ENCODE measurements at regions of chr17 and their contacts with region 1.

Region 1: DNA sequence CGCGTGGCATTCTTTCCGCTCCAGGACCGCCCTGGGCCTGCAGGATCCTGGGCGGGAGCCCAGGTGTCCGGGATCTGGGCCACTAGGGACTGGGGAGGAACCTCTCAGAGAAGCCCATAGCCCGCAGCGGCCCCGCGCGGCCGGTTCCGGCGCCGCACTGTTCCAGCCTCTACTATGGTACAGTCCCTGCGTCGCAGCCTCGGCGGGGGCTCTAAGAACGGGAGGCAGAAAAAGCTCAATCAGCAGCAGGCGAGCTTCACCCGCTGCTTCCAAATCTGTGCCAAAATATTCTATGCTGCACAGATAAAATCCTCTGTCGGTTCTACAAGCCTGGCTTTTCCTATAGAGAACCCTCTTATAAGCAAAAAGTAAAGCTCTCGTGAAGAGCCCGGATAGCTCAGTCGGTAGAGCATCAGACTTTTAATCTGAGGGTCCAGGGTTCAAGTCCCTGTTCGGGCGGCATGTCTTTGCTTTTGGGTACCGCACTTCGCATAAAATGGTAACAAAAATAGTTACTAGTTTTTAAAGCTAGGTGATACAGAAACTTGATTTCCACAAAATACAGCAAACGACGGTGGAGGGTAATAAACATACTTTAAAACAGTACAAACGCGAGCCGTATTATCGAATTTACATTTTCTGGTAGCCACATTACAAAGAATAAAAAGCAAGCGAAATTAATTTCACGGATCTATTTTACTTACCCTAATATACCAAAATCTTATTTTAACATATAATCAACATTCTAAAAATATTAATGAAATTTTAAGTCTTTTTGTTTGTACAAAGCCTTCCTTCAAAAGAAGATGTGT is 661 bp upstream of the ALOXE3 start:
- DNase-seq: peak; percentile 78
- H3K4me3 Mint-ChIP-seq: peak overlapping the region; percentile 91
- H3K27ac Mint-ChIP-seq: peak overlapping the region; percentile 97
- H3K4me1 Mint-ChIP-seq: peaks cover 46% of the 10 kb centered on the region
- H3K27me3 Mint-ChIP-seq: peaks cover 67% of the 10 kb centered on the region

Region 2: DNA sequence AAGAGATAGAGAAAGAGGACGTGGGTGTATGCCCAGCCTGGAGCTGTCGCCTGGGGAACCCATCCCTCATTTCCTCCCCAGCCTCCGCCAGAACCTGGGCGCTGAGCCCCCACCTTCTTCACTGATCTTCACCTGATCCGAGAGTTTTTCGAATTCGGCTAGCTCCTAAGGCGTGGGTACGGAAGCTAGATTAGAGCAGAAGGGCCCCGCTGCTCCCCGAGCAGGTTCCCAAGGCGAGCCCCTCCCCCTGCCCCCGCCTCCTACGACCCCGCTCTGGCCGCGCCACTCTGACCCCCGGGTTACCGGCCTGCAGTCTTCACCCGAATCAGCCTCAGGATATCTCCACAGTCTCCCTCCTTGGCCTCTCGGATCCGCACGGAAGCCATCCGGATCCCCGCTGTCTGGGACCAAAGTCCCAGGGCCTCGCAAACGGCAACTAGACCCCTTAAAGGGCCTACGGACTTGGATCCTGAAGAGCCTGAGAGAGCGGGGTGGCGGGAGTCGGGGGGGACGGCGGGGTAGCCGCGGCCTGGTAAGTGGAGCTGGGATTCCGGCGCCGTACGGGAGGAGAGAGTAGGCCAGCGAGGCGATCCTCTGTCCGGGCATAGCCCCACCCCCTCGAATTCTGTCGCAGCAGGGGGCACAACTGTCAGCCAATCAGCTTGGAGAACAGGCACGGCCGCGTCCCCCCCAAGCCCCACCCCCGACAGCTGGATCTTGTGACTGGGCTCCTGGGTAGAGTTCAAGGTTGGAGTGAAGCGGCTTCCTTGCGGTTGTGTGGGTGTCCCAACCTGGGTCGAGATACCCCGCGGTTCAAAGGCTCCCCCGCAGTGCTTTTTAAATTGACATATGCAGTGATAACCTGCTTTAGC is 491.5 kb before region 1 on chr17 and contains the start of gene SAT2:
- intact Hi-C with region 1: loop called (anchors 2 kb)
- DNase-seq: peak; percentile 77
- H3K4me3 Mint-ChIP-seq: peak within 1 kb of the TSS; percentile 89
- H3K27ac Mint-ChIP-seq: peak within 1 kb of the TSS; percentile 77
- H3K4me1 Mint-ChIP-seq: peaks cover 18% of the 10 kb centered on the region
- H3K27me3 Mint-ChIP-seq: no peaks in the 10 kb centered on the region
- total RNA-seq, gene SAT2: 23.8 and 24.0 TPM in 2 replicates

Region 3: DNA sequence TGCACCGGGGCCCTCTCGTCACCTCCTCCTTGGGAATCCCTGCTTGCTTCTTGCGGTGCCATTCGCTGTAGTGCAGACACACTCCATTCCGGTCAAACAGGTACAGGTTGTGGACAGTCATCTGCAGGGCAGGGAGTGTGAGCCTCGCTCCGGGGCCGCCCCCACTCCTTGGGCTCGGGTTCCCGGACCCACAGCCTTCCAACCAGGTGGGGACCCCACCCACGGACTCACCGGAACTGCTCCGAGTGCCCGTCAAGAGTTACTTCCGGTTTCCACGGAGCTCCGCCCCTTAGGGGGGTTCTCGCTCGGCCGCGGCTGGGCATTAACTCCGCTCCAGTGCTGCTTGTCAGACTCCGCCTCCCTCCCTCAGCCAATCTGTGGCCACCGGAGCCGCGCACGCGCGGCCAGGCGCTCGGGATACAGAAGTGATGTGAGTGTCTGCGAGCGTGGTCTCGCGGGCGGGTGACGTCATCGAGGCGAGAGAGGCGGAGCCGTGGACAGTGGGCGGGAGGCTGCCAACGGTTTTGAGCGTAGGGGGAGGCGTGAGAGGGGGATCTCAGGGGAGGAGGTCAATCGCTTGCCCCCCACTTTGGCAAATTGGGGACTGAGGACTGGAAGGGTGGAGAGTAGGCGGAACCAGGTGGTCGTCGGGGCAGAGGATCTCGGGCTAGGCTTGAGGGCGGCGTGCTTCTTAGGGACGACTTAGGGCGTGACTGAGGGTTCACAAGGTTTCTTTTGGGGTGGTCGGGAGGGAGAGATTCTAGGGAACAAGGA is 187.1 kb before region 1 on chr17 and contains the starts of genes CNTROB and TRAPPC1:
- intact Hi-C with region 1: loop called (anchors 1 kb)
- DNase-seq: peak; percentile 100
- H3K4me3 Mint-ChIP-seq: peak within 1 kb of the TSS; percentile 99
- H3K27ac Mint-ChIP-seq: peak within 1 kb of the TSS; percentile 99
- H3K4me1 Mint-ChIP-seq: peaks cover 42% of the 10 kb centered on the region
- H3K27me3 Mint-ChIP-seq: no peaks in the 10 kb centered on the region
- total RNA-seq, gene CNTROB: 53.5 and 54.7 TPM in 2 replicates
- total RNA-seq, gene TRAPPC1: 153 and 162 TPM in 2 replicates

Region 4: GRCh38 chr17:8091033-8091687 is 27.8 kb before region 1 on chr17:
- intact Hi-C with region 1: loop called (anchors 1 kb)
- DNase-seq: no peak
- H3K4me3 Mint-ChIP-seq: no peak overlapping the region
- H3K27ac Mint-ChIP-seq: no peak overlapping the region
- H3K4me1 Mint-ChIP-seq: peaks cover 14% of the 10 kb centered on the region
- H3K27me3 Mint-ChIP-seq: peaks cover 24% of the 10 kb centered on the region

Region 5: GRCh38 chr17:8173056-8173870 is 54.3 kb after region 1 on chr17:
- intact Hi-C with region 1: loop called (anchors 1 kb)
- DNase-seq: peak; percentile 76
- H3K4me3 Mint-ChIP-seq: peak overlapping the region; percentile 87
- H3K27ac Mint-ChIP-seq: peak overlapping the region; percentile 99
- H3K4me1 Mint-ChIP-seq: peaks cover 45% of the 10 kb centered on the region
- H3K27me3 Mint-ChIP-seq: peaks cover 2% of the 10 kb centered on the region

Region 6: DNA sequence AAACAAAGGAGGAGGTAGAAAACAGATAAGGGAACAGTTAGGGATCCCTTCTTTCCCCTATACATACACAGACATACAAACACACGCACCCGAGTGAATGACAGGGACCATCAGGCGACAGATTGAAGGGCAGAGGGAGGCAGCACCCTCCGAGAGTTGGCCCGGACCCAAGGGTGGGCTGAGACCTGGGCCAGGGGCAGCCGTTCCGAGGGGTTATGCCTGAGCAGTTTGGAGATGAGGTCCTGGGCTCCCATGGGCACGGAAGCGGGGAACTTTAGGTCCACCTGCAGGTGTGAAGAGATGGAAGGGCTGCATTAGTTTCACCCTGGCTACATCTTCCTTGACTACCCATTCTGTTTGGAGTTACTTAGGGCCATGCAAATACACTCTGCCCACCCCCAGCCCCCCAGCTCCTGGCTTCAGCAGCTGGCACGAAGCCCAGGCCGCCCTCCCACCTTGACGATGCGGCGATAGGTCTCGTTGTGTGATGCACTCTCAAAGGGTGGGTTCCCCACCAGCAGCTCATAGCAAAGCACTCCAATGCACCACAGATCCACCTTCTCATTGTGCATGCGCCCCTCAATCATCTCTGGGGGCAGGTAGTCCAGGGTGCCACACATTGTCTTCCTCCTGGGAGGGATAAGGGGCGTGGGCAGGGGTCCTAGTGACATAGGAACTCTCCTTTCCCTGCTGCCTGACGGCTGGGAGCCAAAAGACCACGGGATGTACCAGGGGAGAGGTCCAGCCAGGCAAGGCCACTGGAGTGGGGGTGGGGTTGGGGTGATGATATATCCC is 86.0 kb after region 1 on chr17:
- intact Hi-C with region 1: no loop called
- DNase-seq: no peak
- H3K4me3 Mint-ChIP-seq: no peak overlapping the region
- H3K27ac Mint-ChIP-seq: no peak overlapping the region
- H3K4me1 Mint-ChIP-seq: peaks cover 26% of the 10 kb centered on the region
- H3K27me3 Mint-ChIP-seq: no peaks in the 10 kb centered on the region

Region 7: DNA sequence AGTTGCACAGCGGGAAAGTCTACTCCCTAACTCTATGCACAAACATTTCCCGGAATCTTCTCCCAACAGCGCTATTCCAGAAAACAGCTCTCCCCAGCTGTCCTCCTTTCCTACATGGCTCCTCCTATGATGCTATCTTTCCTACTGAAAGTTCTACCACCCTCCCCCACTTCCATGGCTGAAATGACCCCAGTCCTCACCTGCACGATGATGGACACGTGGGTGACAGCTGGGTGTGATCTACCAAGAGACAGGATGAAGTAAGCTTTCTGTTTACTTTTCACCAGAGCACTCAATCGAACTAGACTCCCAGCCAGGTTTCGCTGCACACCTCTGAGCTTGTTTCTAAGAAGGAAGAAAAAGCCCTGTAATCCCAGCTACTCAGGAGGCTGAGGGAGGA is 118.2 kb after region 1 on chr17:
- intact Hi-C with region 1: no loop called
- DNase-seq: no peak
- H3K4me3 Mint-ChIP-seq: no peak overlapping the region
- H3K27ac Mint-ChIP-seq: no peak overlapping the region
- H3K4me1 Mint-ChIP-seq: no peaks in the 10 kb centered on the region
- H3K27me3 Mint-ChIP-seq: no peaks in the 10 kb centered on the region

Region 8: DNA sequence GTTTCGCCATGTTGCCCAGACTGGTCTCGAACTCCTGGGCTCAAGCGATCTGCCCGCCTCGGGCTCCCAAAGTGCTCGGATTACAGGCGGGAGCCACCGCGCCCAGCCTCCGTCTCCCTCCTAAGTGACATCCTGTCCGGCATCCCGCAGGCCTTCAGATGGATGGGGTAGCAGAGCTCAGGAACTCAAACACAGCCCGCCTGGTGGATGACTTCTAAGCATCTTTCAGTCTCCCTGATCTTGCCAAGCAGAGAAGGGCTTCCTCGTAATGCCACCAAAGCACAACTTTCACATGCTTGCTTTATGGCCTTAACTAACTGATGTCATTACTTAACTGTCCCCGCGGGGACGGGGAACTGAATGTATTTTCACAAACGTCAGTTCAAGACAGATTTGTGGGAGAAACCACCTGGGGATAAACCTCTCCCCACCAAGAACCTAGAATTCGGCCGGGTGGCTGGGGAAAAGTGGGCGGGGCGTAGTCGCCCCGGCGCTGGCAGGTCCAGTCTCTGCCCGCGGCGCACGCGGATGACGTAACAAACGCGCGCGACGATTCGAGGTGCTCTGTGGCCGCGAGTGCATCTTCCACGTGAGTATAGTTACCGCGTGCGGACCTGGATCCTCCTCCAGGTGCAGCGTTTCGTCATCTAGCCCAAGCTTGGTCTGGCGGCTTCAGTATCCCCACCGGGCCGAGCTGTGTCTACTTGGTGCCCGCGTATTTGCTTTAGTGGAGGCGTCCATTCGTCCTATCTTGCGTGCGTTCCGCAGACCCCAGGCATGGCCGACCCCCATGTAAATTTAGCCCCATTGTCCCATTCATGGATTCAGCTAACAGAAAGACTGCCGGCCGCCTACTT is 130.0 kb after region 1 on chr17 and contains the start of gene PFAS:
- intact Hi-C with region 1: loop called (anchors 1 kb)
- DNase-seq: peak; percentile 95
- H3K4me3 Mint-ChIP-seq: peak within 1 kb of the TSS; percentile 98
- H3K27ac Mint-ChIP-seq: peak within 1 kb of the TSS; percentile 100
- H3K4me1 Mint-ChIP-seq: peaks cover 40% of the 10 kb centered on the region
- H3K27me3 Mint-ChIP-seq: peaks cover 1% of the 10 kb centered on the region
- total RNA-seq, gene PFAS: 189 and 204 TPM in 2 replicates

Region 9: GRCh38 chr17:8745586-8746500 is 626.9 kb after region 1 on chr17:
- intact Hi-C with region 1: loop called (anchors 10 kb)
- DNase-seq: peak; percentile 63
- H3K4me3 Mint-ChIP-seq: peak overlapping the region; percentile 87
- H3K27ac Mint-ChIP-seq: peak overlapping the region; percentile 75
- H3K4me1 Mint-ChIP-seq: peaks cover 13% of the 10 kb centered on the region
- H3K27me3 Mint-ChIP-seq: peaks cover 6% of the 10 kb centered on the region

Measured in activated T-helper 1 cell treated with anti-CD3 and anti-CD28 coated beads, Interleukin-12 subunit alpha, Interleukin-12 subunit beta, Interleukin-2, Interleukin-4 antibody, amounts not matched to agents 30 ng/mL and 10 ng/mL and 1 ng/mL, durations not matched to agents 14 hours and 24 hours and 36 hours (primary cell).